Colonic mucosa (tissue), 4 donors: ENCODE measurements at regions of chr6 and their contacts with region 1.

Region 1: DNA sequence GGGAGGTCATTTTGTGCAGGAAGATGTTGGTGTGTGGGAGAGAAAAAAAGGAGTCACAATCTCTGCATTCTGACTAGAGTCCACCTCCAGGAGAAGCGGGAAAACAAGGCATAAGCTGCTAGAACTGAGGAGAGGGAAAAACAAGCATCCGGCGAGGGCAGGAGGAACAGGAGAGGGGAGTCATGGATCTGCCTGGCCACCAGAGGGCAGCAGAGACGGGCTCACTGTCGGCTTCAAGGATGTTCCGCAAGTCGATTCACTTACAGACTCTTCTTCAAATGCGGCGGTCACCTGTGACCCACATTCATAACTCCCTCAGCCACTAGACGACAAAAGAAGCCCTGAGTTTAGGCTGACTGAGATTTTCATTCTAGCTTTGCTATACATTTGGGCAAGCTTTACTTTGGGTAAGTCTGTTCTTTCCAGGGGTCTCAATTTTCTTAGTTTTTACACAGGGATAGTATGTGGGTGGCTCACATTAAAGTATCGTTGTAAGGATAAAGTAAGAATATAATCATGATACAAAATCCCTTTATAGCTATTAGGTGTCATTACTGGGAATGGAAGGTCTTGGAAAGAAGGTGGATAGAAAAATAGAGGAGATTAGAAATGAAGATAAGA is 6.6 kb upstream of the BTNL2 start:
- DNase-seq: peak; percentile 82
- H3K4me3 ChIP-seq: no peak overlapping the region
- H3K27ac ChIP-seq: no peak overlapping the region
- H3K4me1 ChIP-seq: peaks cover 5% of the 10 kb centered on the region
- H3K27me3 ChIP-seq: peaks cover 18% of the 10 kb centered on the region
- CTCF ChIP-seq: peak; percentile 93

Region 2: DNA sequence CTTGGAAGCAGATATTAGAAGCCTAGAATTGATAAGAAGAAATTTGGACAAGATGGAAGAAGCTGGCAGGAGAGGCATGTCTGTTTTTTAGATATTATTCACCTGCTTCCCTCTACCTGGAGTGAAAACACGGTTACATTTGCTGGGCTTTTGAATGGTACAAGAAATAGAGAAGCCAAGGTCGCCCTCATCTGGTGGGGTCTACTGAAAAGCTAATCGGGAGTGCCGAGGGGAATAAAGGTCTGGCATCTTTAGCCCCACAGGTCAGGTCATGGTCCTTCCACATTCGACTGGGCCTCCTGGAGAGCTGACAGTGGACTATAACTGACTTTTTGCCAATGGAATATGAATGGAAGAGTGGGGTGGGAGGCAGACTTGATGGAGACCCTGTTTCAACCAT is 490.6 kb before region 1 on chr6:
- intact Hi-C with region 1: no loop called
- DNase-seq: no peak
- H3K4me3 ChIP-seq: no peak overlapping the region
- H3K27ac ChIP-seq: no peak overlapping the region
- H3K4me1 ChIP-seq: no peaks in the 10 kb centered on the region
- H3K27me3 ChIP-seq: no peaks in the 10 kb centered on the region
- CTCF ChIP-seq: no peak

Region 3: DNA sequence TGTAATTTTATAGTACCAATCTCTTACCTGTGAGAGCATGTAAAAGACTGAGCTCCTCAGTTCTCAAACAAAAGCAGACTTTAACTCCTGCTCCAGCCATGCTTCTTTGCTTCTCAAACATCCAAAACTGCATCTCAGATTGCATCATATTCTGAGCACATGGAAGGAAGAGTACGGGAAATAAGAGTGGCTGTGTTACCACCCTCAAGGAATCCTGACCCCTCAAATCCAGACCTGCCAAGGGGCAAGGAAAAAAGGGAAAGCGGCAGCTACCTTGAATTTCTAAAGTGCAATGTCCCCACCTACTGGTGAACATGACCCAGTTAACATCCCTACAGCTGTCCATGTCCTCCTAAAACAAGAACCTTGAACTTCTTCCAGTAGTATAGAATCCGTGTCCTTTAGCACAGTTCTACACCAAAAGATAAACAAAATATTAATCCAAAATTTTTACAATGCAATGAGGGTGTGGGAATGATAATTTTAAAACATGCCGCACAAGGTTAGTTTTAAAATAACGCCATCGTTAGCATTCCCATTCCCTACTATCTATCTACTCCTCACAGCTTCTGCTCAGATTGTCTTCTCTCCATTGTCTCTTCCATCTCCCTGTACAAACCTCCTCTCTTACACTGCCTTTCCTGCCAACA is 287.0 kb after region 1 on chr6:
- intact Hi-C with region 1: loop called (anchors 5 kb)
- DNase-seq: peak; percentile 48
- H3K4me3 ChIP-seq: no peak overlapping the region
- H3K27ac ChIP-seq: no peak overlapping the region
- H3K4me1 ChIP-seq: no peaks in the 10 kb centered on the region
- H3K27me3 ChIP-seq: no peaks in the 10 kb centered on the region
- CTCF ChIP-seq: peak; percentile 57

Region 4: DNA sequence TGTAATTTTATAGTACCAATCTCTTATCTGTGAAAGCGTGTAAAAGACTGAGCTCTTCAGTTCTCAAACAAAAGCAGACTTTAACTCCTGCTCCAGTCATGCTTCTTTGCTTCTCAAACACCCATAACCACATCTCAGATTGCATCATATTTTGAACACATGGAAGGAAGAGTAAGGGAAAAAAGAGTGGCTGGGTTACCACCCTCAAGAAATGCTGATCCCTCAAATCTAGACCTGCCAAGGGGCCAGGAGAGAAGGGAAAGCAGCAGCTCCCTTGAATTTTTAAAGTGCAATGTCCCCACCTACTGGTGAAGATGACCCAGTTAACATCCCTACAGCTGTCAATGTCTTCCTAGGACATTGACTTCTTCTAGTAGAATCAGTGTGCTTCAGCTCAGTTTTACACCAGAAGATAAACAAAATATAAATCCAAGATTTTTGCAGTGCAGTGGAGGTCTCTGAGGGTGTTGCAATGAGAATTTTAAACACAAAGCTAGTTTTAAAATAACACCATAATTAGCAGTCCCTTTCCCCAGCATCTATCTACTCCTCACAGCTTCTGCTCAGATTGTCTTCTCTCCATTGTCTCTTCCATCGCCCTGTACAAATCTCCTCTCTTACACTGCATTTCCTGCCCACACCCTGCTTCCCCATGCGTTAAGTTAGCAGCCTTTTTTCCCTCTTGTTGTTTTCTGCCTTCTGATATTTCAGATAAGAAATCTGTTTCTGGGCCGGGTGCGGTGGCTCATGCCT is 372.4 kb after region 1 on chr6:
- intact Hi-C with region 1: loop called (anchors 2 kb)
- DNase-seq: peak; percentile 56
- H3K4me3 ChIP-seq: no peak overlapping the region
- H3K27ac ChIP-seq: no peak overlapping the region
- H3K4me1 ChIP-seq: no peaks in the 10 kb centered on the region
- H3K27me3 ChIP-seq: no peaks in the 10 kb centered on the region
- CTCF ChIP-seq: peak; percentile 44

Region 5: DNA sequence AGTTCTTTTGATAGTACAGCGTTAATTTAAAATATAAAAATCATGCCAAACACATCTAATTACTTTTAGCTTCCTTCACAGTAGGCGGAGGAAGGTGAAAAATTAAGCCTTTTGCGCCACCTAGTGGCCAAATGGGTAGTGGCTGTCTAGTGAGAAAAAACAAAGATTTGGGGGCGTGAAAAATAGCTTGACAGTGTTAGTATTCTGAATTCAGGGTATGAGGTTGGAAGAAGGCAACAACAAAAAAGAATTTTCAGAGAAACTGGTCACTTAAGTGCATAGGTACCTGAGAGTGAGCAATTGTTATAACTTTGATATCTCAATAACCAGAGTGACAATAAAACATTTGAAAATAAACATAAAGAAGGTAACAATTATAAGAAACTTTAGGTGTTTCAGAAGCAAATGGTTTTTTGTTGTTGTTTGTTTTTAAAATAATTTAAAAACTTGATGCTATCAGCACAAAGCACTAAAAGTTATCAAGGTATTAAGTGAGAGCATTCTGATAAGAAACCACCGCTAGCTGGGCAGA is 454.8 kb after region 1 on chr6:
- intact Hi-C with region 1: loop called (anchors 10 kb)
- DNase-seq: peak; percentile 87
- H3K4me3 ChIP-seq: no peak overlapping the region
- H3K27ac ChIP-seq: no peak overlapping the region
- H3K4me1 ChIP-seq: no peaks in the 10 kb centered on the region
- H3K27me3 ChIP-seq: no peaks in the 10 kb centered on the region
- CTCF ChIP-seq: peak; percentile 95